Mammary epithelial cell (primary cell): ENCODE measurements at regions of chr12 and their contacts with region 1.

Region 1: GRCh38 chr12:76031537-76032073 is at the start of gene PHLDA1:
- DNase-seq: peak; percentile 98
- H3K4me3 ChIP-seq: peak within 1 kb of the TSS; percentile 87 to 96 (median 93)
- H3K27ac ChIP-seq: peak within 1 kb of the TSS; percentile 93
- H3K4me1 ChIP-seq: peaks cover 9% of the 10 kb centered on the region
- H3K27me3 ChIP-seq: no peaks in the 10 kb centered on the region
- CTCF ChIP-seq: peak; percentile 26 to 79
- total RNA-seq, gene PHLDA1: 161 to 545 TPM

Region 2: DNA sequence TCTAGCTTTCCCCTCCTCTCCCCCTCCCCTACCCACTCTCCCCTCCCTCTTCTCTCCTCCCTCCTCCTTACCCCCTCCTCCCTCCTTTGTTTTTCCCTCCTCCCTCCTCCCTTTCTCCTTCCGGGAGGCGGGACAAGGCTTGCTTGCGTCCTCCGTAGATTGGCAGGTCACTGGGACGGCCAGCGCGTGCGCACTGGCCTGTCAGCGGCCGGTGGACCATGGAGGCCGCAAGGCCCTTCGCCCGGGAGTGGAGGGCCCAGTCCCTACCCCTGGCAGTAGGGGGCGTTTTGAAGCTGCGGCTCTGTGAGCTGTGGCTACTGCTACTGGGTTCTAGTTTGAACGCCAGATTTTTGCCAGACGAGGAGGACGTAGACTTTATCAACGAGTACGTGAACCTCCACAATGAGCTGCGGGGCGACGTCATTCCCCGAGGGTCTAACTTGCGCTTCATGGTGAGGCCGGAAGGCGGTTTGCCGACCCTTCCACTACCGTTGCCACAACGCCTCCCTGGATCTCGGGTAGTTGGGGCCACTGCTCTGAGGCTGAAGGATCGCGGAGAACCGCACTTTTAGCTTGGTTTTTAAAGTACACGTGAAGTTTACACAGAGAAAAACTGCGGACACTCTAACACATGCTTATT is 640.6 kb before region 1 on chr12 and contains the start of gene GLIPR1L2:
- CTCF ChIA-PET with region 1: no interaction called
- dilution Hi-C with region 1: no loop called
- in situ Hi-C with region 1: no loop called
- intact Hi-C with region 1: loop called (anchors 5 kb)
- DNase-seq: peak; percentile 98
- H3K4me3 ChIP-seq: peak within 1 kb of the TSS; percentile 50 to 80 (median 54)
- H3K27ac ChIP-seq: peak within 1 kb of the TSS; percentile 80
- H3K4me1 ChIP-seq: peaks cover 20% of the 10 kb centered on the region
- H3K27me3 ChIP-seq: no peaks in the 10 kb centered on the region
- CTCF ChIP-seq: peak; percentile 76 to 95
- total RNA-seq, gene GLIPR1L2: 0.80 to 1.2 TPM

Region 3: DNA sequence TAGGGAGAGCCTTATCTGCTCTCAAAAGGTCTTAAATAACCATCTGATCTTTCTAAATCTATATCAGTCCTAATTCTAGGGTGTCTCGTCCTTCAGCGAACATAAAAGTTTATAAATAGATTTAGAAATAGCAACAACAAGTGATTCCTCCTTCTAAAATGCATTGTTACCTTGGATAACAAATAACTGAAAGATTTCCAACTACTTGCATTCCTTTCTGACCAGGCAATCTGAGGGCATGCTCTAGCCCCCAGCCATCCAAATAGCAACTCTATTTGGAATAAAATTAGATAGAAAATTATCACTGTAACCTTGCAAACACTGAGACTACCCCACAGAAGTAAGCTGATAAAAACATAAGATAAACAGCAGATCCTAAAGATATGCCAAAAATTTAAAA is 498.4 kb before region 1 on chr12:
- CTCF ChIA-PET with region 1: interaction called, 5 read pairs
- dilution Hi-C with region 1: no loop called
- in situ Hi-C with region 1: loop called (anchors 5 to 10 kb)
- intact Hi-C with region 1: no loop called
- DNase-seq: no peak
- H3K4me3 ChIP-seq: no peak overlapping the region
- H3K27ac ChIP-seq: no peak overlapping the region
- H3K4me1 ChIP-seq: no peaks in the 10 kb centered on the region
- H3K27me3 ChIP-seq: no peaks in the 10 kb centered on the region
- CTCF ChIP-seq: no peak

Region 4: GRCh38 chr12:75635606-75636410 is 395.8 kb before region 1 on chr12:
- CTCF ChIA-PET with region 1: no interaction called
- dilution Hi-C with region 1: no loop called
- in situ Hi-C with region 1: loop called in 1 of 2 experiments (anchors 10 kb)
- intact Hi-C with region 1: loop called (anchors 5 kb)
- DNase-seq: peak; percentile 91
- H3K4me3 ChIP-seq: no peak overlapping the region
- H3K27ac ChIP-seq: peak overlapping the region; percentile 27
- H3K4me1 ChIP-seq: peaks cover 42% of the 10 kb centered on the region
- H3K27me3 ChIP-seq: no peaks in the 10 kb centered on the region
- CTCF ChIP-seq: no peak

Region 5: DNA sequence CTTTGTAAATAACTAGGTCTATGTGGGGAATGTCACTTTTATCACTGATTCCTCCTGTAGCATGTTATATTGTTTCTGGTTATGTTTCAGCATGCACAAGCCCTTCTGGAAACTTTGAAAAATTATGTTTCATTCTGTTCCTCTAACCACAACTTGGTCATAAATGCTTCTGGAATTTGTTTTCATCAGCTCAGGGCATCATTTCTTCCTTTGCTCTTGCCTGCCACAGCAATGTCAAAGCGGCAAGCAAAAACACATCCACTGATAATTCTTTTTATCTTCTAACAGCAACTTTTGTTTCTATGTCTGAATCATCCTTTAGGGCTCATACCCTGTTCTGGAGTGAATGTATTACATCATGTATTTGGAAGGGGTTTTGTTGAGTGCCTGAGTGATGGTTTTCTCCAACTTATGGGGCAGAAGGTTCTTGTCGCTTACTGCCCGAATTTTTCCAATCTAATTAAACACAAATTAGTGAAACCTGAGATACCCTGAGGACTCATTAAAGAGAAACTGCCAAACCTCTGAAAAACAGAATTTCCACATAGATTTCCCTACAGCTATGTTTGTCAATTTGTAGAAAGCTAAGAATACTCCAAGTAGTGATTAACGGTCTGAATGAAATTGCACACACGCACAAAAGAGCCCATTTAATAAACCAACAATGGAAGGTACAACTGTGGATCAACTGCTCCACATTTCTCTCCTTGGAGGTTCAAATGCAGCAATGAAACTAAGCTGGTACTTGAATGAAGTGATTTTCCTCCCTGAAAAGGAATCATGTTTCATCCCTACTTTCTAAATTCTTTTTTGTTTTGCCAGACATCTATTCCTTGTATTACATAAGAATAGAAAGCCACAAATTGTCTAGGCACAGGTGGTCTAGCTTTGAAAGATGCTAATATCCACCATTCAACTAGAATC is 346.7 kb before region 1 on chr12:
- CTCF ChIA-PET with region 1: no interaction called
- dilution Hi-C with region 1: no loop called
- in situ Hi-C with region 1: no loop called
- intact Hi-C with region 1: loop called (anchors 2 kb)
- DNase-seq: peak; percentile 97
- H3K4me3 ChIP-seq: no peak overlapping the region
- H3K27ac ChIP-seq: peak overlapping the region; percentile 92
- H3K4me1 ChIP-seq: peaks cover 25% of the 10 kb centered on the region
- H3K27me3 ChIP-seq: no peaks in the 10 kb centered on the region
- CTCF ChIP-seq: no peak

Region 6: GRCh38 chr12:76049575-76050251 is 18.1 kb after region 1 on chr12:
- CTCF ChIA-PET with region 1: no interaction called
- dilution Hi-C with region 1: no loop called
- in situ Hi-C with region 1: no loop called
- intact Hi-C with region 1: no loop called
- DNase-seq: no peak
- H3K4me3 ChIP-seq: no peak overlapping the region
- H3K27ac ChIP-seq: no peak overlapping the region
- H3K4me1 ChIP-seq: no peaks in the 10 kb centered on the region
- H3K27me3 ChIP-seq: no peaks in the 10 kb centered on the region
- CTCF ChIP-seq: no peak

Region 7: GRCh38 chr12:76586764-76587395 is 555.3 kb after region 1 on chr12:
- CTCF ChIA-PET with region 1: no interaction called
- dilution Hi-C with region 1: no loop called
- in situ Hi-C with region 1: no loop called
- intact Hi-C with region 1: loop called (anchors 10 kb)
- DNase-seq: peak; percentile 43
- H3K4me3 ChIP-seq: no peak overlapping the region
- H3K27ac ChIP-seq: no peak overlapping the region
- H3K4me1 ChIP-seq: peaks cover 7% of the 10 kb centered on the region
- H3K27me3 ChIP-seq: no peaks in the 10 kb centered on the region
- CTCF ChIP-seq: peak; percentile 73 to 74